ENCODE measurements at regions of chr13 and their contacts with region 1.

Region 1: DNA sequence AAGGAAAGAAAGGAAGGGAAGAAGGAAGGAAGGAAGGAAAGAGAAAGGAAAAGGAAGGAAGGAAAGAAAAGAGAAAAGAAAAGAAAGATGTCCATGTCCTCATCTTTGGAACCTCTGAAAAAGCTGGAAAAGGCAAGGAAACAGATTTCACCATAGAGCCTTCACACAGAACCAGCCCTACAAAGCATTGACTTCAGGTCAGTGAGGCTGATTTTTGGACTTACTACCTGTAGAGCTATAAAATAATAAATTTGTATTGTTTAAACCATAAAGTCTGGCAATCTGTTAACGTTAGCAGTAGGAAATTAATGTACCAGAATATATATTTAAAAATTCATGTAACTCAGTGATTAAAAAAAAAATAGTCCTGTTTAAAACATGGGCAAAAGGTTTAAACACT is 130.0 kb downstream of the PIBF1 start:
- DNase-seq: no peak

Region 2: GRCh38 chr13:72884101-72884500 is 27.9 kb before region 1 on chr13:
- intact Hi-C with region 1: loop called (anchors 2 kb)
- DNase-seq: no peak